CD8-positive, alpha-beta T cell (primary cell): ENCODE measurements at regions of chr10 and their contacts with region 1.

Region 1: DNA sequence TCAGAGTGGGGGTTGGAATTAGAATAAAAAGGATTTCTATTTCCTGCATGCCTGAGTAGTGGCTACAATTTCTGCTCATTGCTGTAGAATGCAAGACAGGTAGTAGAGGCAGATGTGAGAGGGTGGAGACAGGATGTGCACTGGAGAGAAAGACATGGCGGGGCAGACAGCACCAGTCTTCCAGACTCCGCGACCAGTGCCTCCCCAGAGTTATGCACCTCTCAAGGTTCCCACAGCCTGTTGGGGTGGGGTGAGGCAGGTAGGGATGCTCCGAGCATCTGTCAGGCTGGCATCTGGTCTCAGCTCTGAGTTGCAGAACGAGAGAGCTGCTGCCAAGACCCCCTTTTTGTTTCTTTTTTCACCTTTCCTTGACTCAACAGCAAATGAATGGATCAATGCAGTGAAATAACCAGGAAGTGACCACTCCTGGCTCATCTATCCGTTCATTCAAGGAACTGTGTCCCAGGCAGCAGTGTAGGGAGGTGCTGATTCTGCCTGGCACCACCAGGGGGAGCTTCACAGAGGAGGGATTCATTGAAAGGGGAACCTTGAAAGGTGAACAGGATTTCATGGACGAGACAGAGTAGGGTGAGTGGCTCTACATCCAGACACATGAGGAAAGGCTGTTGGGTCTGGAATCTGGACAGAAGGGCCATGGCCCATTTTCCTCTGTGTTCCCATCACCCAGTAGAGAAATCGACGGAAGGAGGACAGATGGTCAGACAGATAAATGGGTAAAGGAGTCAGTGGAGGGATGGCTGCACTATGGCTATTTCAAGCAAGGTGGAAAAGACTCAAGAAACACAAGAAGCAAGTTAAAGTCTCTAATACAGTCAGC is 17.2 kb upstream of the SLC18A3 start:
- DNase-seq: peak; percentile 18 to 71 (median 52)
- ATAC-seq: peak; percentile 57
- H3K4me3 ChIP-seq: no peak overlapping the region
- H3K4me3 Mint-ChIP-seq: no peak overlapping the region
- H3K27ac ChIP-seq: no peak overlapping the region
- H3K27ac Mint-ChIP-seq: no peak overlapping the region
- H3K4me1 ChIP-seq: no peaks in the 10 kb centered on the region
- H3K4me1 Mint-ChIP-seq: peaks cover 3% of the 10 kb centered on the region
- H3K27me3 ChIP-seq: no peaks in the 10 kb centered on the region
- H3K27me3 Mint-ChIP-seq: peaks cover 28% of the 10 kb centered on the region
- CTCF ChIP-seq: peak; percentile 74

Region 2: DNA sequence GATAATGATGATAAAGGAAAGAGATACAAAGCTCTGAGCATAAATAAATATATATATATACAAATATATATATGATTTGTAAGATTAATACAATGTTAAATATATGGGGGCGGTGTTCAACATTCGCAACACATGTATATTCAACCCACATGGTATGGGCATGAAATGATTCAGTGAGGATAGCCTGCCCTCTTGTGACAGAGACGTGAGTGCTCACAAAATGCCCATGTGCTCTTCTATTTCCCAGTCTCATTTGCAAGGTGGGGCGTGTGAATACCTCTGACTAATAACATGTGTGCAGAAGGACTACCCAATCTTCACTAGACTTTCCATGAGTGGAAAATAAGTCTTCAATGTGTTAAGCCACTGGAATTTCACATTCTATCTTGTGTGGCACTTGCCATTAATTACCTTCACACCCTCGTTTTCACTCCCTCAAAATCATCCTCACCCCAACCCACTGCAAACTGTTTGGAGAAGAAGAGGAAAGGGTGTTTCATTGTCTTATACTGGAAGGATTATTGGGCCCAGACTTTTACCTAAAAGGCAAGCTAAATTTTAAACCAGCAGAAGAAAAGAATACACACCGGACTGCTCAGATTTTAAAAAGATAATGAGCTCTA is 631.5 kb after region 1 on chr10:
- CTCF ChIA-PET with region 1: interaction called, 4 read pairs
- POLR2A ChIA-PET with region 1: no interaction called
- intact Hi-C with region 1: loop called in 1 of 2 experiments (anchors 1 kb)
- DNase-seq: peak in 4 of 9 experiments; percentile 7 to 57 (median 26)
- ATAC-seq: peak; percentile 36
- H3K4me3 ChIP-seq: no peak overlapping the region
- H3K4me3 Mint-ChIP-seq: no peak overlapping the region
- H3K27ac ChIP-seq: no peak overlapping the region
- H3K27ac Mint-ChIP-seq: no peak overlapping the region
- H3K4me1 ChIP-seq: no peaks in the 10 kb centered on the region
- H3K4me1 Mint-ChIP-seq: no peaks in the 10 kb centered on the region
- H3K27me3 ChIP-seq: no peaks in the 10 kb centered on the region
- H3K27me3 Mint-ChIP-seq: peaks cover 13% of the 10 kb centered on the region
- CTCF ChIP-seq: peak; percentile 21

Region 3: GRCh38 chr10:50275650-50276235 is 682.8 kb after region 1 on chr10:
- CTCF ChIA-PET with region 1: no interaction called
- POLR2A ChIA-PET with region 1: no interaction called
- intact Hi-C with region 1: loop called in 1 of 2 experiments (anchors 10 kb)
- DNase-seq: peak in 6 of 9 experiments; percentile 6 to 56 (median 32)
- ATAC-seq: no peak
- H3K4me3 ChIP-seq: no peak overlapping the region
- H3K4me3 Mint-ChIP-seq: no peak overlapping the region
- H3K27ac ChIP-seq: no peak overlapping the region
- H3K27ac Mint-ChIP-seq: no peak overlapping the region
- H3K4me1 ChIP-seq: no peaks in the 10 kb centered on the region
- H3K4me1 Mint-ChIP-seq: no peaks in the 10 kb centered on the region
- H3K27me3 ChIP-seq: no peaks in the 10 kb centered on the region
- H3K27me3 Mint-ChIP-seq: peaks cover 18% of the 10 kb centered on the region
- CTCF ChIP-seq: peak; percentile 40